ENCODE measurements at regions of chr17 and their contacts with region 1.

Region 1: GRCh38 chr17:15257258-15257788 is 7.8 kb downstream of the PMP22 start:
- DNase-seq: peak; percentile 62 to 85 (median 77)
- ATAC-seq: peak; percentile 22 to 70 (median 66)
- H3K4me3 ChIP-seq: no peak overlapping the region
- H3K27ac ChIP-seq: no peak overlapping the region
- H3K4me1 ChIP-seq: peaks cover 5 to 15% (median 6%) of the 10 kb centered on the region in 3 donors
- H3K27me3 ChIP-seq: no peaks in the 10 kb centered on the region
- CTCF ChIP-seq: peak; percentile 72 to 88 (median 80)

Region 2: GRCh38 chr17:14922411-14922810 is 334.9 kb before region 1 on chr17:
- intact Hi-C with region 1: no loop called
- DNase-seq: peak in 5 of 6 donors; percentile 43 to 70 (median 64)
- ATAC-seq: peak; percentile 68 to 82 (median 79)
- H3K4me3 ChIP-seq: no peak overlapping the region
- H3K27ac ChIP-seq: peak overlapping the region in 3 of 4 donors; percentile 14 to 47 (median 20)
- H3K4me1 ChIP-seq: peaks cover 0 to 8% (median 0%) of the 10 kb centered on the region in 3 donors
- H3K27me3 ChIP-seq: no peaks in the 10 kb centered on the region
- CTCF ChIP-seq: no peak

Region 3: GRCh38 chr17:15213381-15214087 is 43.8 kb before region 1 on chr17:
- intact Hi-C with region 1: no loop called
- DNase-seq: no peak
- ATAC-seq: no peak
- H3K4me3 ChIP-seq: no peak overlapping the region
- H3K27ac ChIP-seq: no peak overlapping the region
- H3K4me1 ChIP-seq: no peaks in the 10 kb centered on the region
- H3K27me3 ChIP-seq: no peaks in the 10 kb centered on the region
- CTCF ChIP-seq: peak in 1 of 4 donors; percentile 16

Region 4: DNA sequence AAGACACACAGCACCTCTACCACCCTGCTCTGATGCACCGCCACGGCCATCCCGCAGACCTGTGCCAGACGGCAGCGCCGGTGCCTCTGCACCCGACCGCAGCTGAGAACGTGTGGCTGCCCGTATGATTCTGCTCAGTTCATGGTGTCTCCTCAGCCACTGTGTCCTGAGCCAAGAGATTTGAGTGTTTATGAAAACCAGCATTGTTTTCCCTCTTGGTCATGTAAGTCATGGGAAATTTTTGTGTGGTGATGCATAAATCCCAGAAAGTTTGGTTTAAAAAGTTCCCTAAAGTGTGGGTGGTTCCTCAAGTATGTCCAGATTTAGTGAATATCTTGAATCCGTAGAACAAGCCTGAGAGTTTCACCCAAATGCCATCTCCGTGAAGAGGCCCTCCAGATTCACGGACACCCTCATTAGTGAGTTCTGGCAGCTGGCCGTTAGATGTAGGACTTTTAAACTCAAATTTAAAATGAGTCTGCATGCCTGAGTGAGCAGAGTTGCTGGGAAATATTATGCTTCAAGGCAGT is 152.5 kb after region 1 on chr17:
- intact Hi-C with region 1: loop called in 1 of 3 experiments (anchors 10 kb)
- DNase-seq: no peak
- ATAC-seq: peak in 3 of 4 donors; percentile 44 to 76 (median 72)
- H3K4me3 ChIP-seq: no peak overlapping the region
- H3K27ac ChIP-seq: peak overlapping the region in 3 of 4 donors; percentile 29 to 61 (median 31)
- H3K4me1 ChIP-seq: no peaks in the 10 kb centered on the region
- H3K27me3 ChIP-seq: no peaks in the 10 kb centered on the region
- CTCF ChIP-seq: no peak

Region 5: GRCh38 chr17:15502369-15503112 is 245.2 kb after region 1 on chr17:
- intact Hi-C with region 1: loop called in 1 of 3 experiments (anchors 5 kb)
- DNase-seq: peak; percentile 54 to 83 (median 70)
- ATAC-seq: peak; percentile 71 to 96 (median 92)
- H3K4me3 ChIP-seq: no peak overlapping the region
- H3K27ac ChIP-seq: no peak overlapping the region
- H3K4me1 ChIP-seq: no peaks in the 10 kb centered on the region
- H3K27me3 ChIP-seq: no peaks in the 10 kb centered on the region
- CTCF ChIP-seq: peak; percentile 25 to 46 (median 40)

Region 6: DNA sequence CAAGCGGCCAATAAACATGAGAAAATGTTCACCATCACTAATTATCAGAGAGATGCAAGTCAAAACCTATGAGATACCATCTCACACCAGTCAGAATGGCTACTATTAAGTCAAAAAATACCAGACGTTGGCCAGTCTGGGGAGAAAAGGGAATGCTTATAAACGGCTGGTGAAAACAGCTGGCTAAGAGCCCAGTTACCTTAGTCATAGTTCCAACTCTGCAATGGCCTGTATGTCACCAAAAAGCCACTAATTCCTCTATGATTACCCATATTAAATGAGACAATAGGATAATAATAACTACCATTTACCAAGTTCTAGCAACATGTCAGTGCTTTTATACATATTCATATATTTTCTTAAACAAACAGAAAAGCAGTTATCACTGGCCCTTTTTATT is 253.0 kb after region 1 on chr17:
- intact Hi-C with region 1: loop called in 1 of 3 experiments (anchors 10 kb)
- DNase-seq: no peak
- ATAC-seq: peak in 1 of 4 donors; percentile 32
- H3K4me3 ChIP-seq: no peak overlapping the region
- H3K27ac ChIP-seq: no peak overlapping the region
- H3K4me1 ChIP-seq: peaks cover 3 to 8% (median 6%) of the 10 kb centered on the region in 3 donors
- H3K27me3 ChIP-seq: no peaks in the 10 kb centered on the region
- CTCF ChIP-seq: no peak